ENCODE measurements at regions of chr18 and their contacts with region 1.

Region 1: GRCh38 chr18:11553098-11553940 is 56.1 kb upstream of the SLC35G4 start:
- DNase-seq: peak; percentile 63
- H3K4me3 ChIP-seq: no peak overlapping the region
- H3K27ac ChIP-seq: no peak overlapping the region
- H3K4me1 ChIP-seq: no peaks in the 10 kb centered on the region
- H3K27me3 ChIP-seq: peaks cover 7% of the 10 kb centered on the region
- CTCF ChIP-seq: peak; percentile 88

Region 2: DNA sequence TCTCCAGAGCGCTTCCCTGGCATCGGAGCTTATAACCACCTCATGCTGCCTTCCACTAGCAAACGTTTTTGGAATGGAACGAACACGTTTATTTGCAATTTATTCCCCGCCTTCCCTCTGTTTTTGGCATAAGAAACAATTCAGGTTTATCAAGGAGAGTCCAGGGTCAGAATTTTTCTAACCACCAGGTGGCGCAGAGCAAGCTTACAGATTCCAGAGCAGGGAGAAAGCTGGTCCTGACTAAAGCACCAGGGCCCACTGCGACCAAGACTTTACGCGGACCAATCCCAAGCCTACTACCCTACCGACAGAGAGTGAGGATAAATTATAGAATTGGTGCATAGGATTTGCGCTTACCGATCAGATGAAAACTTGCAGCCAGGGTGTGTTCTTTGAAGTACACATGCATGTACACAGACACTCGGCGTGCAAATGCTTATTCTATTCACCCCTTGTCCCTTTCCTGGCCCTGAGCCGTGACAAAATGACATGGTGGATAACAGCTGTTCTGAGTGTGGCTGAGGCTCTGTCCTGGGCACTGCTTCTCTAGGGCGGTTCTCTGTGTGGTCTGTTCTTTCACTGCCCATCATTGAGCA is 992.8 kb before region 1 on chr18:
- CTCF ChIA-PET with region 1: no interaction called
- POLR2A ChIA-PET with region 1: no interaction called
- intact Hi-C with region 1: loop called (anchors 10 kb)
- DNase-seq: peak; percentile 86
- H3K4me3 ChIP-seq: peak overlapping the region; percentile 21
- H3K27ac ChIP-seq: peak overlapping the region; percentile 35
- H3K4me1 ChIP-seq: peaks cover 11% of the 10 kb centered on the region
- H3K27me3 ChIP-seq: no peaks in the 10 kb centered on the region
- CTCF ChIP-seq: peak; percentile 87

Region 3: GRCh38 chr18:10851824-10852319 is 701.4 kb before region 1 on chr18:
- CTCF ChIA-PET with region 1: no interaction called
- POLR2A ChIA-PET with region 1: no interaction called
- intact Hi-C with region 1: loop called (anchors 10 kb)
- DNase-seq: peak; percentile 77
- H3K4me3 ChIP-seq: no peak overlapping the region
- H3K27ac ChIP-seq: no peak overlapping the region
- H3K4me1 ChIP-seq: no peaks in the 10 kb centered on the region
- H3K27me3 ChIP-seq: peaks cover 27% of the 10 kb centered on the region
- CTCF ChIP-seq: peak; percentile 81

Region 4: GRCh38 chr18:11163665-11164064 is 389.7 kb before region 1 on chr18:
- CTCF ChIA-PET with region 1: no interaction called
- POLR2A ChIA-PET with region 1: no interaction called
- intact Hi-C with region 1: loop called (anchors 10 kb)
- DNase-seq: peak; percentile 40
- H3K4me3 ChIP-seq: no peak overlapping the region
- H3K27ac ChIP-seq: no peak overlapping the region
- H3K4me1 ChIP-seq: no peaks in the 10 kb centered on the region
- H3K27me3 ChIP-seq: peaks cover 8% of the 10 kb centered on the region
- CTCF ChIP-seq: peak; percentile 63

Region 5: DNA sequence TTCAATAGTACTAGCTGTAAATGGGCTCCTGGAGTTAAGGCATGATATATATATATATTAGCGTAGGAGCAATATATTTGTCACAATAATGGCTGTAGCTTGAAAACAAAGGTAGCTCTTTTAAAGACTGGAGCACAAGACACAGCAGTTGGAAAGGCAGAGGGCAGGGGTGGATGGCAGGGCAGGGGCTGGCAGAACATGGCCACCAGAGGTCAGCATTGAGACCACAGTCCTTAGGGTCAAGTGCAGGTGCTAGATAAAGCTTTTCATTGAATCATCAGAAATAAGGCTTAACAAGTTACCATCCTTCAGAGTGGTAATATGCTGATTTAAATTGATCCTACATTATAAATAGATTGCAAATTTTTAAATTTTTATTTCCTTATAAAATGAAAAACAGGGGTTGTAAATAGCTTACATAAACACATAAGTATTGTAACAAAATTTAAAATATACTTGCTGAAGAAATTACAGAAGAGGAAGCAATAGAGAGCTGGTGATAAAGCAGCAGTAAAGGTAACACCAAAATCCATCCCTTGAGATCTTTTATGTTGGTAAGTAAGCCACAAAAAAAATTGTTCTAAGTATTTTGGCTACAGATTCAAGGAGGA is 242.7 kb before region 1 on chr18:
- CTCF ChIA-PET with region 1: interaction called, 10 read pairs
- POLR2A ChIA-PET with region 1: no interaction called
- intact Hi-C with region 1: loop called (anchors 5 kb)
- DNase-seq: peak; percentile 48
- H3K4me3 ChIP-seq: no peak overlapping the region
- H3K27ac ChIP-seq: no peak overlapping the region
- H3K4me1 ChIP-seq: no peaks in the 10 kb centered on the region
- H3K27me3 ChIP-seq: peaks cover 25% of the 10 kb centered on the region
- CTCF ChIP-seq: peak; percentile 72

Region 6: DNA sequence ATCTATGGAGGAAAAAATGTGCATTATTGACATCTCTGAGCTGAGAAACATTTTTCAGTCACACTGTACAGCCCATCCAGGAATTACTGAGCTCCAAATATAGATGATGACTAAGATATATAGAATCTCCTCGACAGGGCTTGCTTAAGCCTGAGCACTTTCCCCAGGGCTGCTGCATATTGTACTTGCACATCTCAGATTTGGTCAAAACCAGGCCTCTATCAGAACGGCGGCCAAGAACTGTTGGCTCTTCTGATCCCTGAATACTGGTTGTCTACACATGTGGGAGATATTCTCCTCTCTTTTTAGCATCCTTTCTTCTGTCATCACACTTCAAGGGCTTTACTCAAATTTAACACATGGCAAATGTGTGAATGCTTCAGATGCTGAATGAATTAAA is 145.4 kb before region 1 on chr18:
- CTCF ChIA-PET with region 1: no interaction called
- POLR2A ChIA-PET with region 1: no interaction called
- intact Hi-C with region 1: loop called (anchors 10 kb)
- DNase-seq: no peak
- H3K4me3 ChIP-seq: no peak overlapping the region
- H3K27ac ChIP-seq: no peak overlapping the region
- H3K4me1 ChIP-seq: no peaks in the 10 kb centered on the region
- H3K27me3 ChIP-seq: no peaks in the 10 kb centered on the region
- CTCF ChIP-seq: no peak

Region 7: DNA sequence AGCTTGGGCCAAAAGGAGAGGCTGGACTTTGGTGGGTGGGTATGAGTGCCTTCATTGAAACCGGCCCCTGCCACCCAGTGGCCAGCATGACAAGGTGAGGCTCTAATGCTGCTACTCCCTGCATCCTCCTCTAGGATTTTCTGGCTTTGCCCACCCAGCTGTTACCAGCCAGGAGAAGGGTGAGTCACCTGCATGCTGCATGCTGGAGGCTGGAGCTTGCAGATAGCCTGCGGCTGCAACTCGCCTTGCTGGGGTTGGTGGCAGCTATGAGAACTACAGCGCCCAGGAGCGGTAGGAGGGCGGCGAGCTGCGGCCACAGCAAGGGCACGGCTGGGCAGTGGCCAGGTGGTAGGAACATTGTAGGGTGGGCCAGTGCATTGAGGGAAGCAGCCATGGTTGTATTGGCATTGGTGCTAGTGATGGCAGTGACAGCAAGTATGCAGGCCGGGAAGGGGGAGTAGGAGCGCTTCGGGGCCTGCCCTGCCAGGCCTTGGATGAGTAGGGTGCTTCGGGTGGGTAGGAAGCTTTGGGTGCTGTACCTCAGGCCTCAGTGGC is 19.3 kb before region 1 on chr18:
- CTCF ChIA-PET with region 1: no interaction called
- POLR2A ChIA-PET with region 1: no interaction called
- intact Hi-C with region 1: loop called (anchors 1 kb)
- DNase-seq: no peak
- H3K4me3 ChIP-seq: no peak overlapping the region
- H3K27ac ChIP-seq: no peak overlapping the region
- H3K4me1 ChIP-seq: no peaks in the 10 kb centered on the region
- H3K27me3 ChIP-seq: peaks cover 22% of the 10 kb centered on the region
- CTCF ChIP-seq: no peak

Region 8: DNA sequence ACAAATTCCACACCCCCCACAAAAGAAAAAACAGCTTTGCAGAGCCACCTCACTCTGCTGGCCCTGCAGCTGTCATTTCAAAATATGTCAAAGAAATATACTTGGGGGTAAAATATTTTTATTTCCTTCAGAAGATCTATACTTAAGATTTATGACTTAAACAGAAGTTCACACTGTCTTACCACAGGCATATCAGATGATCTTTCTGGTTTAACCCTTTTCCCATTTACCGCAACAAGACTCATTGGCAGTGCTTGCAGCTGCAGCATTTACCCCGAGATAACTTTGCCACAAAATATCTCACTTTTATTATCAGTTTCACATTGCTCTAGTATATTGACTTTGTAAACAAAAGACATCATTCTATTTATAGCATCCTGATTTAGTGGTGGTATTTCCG is 34.5 kb after region 1 on chr18:
- CTCF ChIA-PET with region 1: no interaction called
- POLR2A ChIA-PET with region 1: no interaction called
- intact Hi-C with region 1: no loop called
- DNase-seq: no peak
- H3K4me3 ChIP-seq: no peak overlapping the region
- H3K27ac ChIP-seq: no peak overlapping the region
- H3K4me1 ChIP-seq: no peaks in the 10 kb centered on the region
- H3K27me3 ChIP-seq: no peaks in the 10 kb centered on the region
- CTCF ChIP-seq: no peak

Measured in A673 (cell line).